Ovary (tissue), 10 donors: ENCODE measurements at regions of chr10 and their contacts with region 1.

Region 1: DNA sequence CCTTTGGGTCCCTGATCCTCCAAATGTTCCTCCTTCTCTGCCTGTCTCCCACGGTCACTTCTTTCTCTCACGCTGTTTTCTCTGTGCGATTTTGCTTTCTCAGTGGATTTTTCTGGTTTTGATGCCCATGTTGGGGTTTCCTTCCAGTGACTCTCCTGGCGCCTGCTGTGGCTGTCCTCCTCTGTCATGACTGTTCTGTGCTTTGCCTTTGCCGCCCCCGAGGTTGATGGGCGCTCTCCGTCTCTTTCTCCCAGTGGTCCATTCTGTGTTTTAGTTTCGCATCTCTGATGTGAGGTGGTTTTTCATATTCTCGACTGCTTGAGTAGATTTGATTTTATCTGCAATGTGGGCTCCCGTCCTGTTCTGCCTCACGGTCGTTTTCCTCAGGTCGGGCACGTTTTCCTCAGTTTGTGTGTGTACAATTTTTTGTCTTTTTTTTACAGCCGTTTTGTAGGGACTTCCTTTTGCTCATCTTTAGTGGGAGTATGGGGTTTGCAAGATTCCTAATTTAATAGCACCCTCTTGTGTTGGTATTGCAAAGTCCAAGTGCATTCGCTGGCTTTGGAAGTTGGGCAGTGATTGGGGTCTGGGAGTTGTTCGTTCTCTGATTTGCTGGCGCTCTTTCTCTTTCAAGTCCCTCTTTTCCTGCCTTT is 100.0 kb downstream of the INPP5A start:
- DNase-seq: peak in 4 of 5 donors; percentile 24 to 36 (median 32)
- H3K4me3 ChIP-seq: no peak overlapping the region
- H3K27ac ChIP-seq: no peak overlapping the region
- H3K4me1 ChIP-seq: peaks cover 6% of the 10 kb centered on the region
- H3K27me3 ChIP-seq: no peaks in the 10 kb centered on the region
- CTCF ChIP-seq: peak; percentile 35 to 82 (median 76)
- EP300 ChIP-seq: no peak
- POLR2A ChIP-seq: no peak

Region 2: GRCh38 chr10:132458593-132459300 is 178.9 kb before region 1 on chr10:
- intact Hi-C with region 1: loop called (anchors 1 to 2 kb)
- DNase-seq: peak; percentile 53 to 82 (median 76)
- H3K4me3 ChIP-seq: no peak overlapping the region
- H3K27ac ChIP-seq: no peak overlapping the region
- H3K4me1 ChIP-seq: peaks cover 3% of the 10 kb centered on the region
- H3K27me3 ChIP-seq: no peaks in the 10 kb centered on the region
- CTCF ChIP-seq: peak; percentile 94 to 98 (median 96)
- EP300 ChIP-seq: no peak
- POLR2A ChIP-seq: peak; percentile 32

Region 3: GRCh38 chr10:132563843-132564521 is 73.6 kb before region 1 on chr10:
- intact Hi-C with region 1: no loop called
- DNase-seq: peak in 2 of 5 donors; percentile 14 to 16
- H3K4me3 ChIP-seq: no peak overlapping the region
- H3K27ac ChIP-seq: no peak overlapping the region
- H3K4me1 ChIP-seq: peaks cover 12% of the 10 kb centered on the region
- H3K27me3 ChIP-seq: no peaks in the 10 kb centered on the region
- CTCF ChIP-seq: no peak
- EP300 ChIP-seq: no peak
- POLR2A ChIP-seq: no peak

Region 4: DNA sequence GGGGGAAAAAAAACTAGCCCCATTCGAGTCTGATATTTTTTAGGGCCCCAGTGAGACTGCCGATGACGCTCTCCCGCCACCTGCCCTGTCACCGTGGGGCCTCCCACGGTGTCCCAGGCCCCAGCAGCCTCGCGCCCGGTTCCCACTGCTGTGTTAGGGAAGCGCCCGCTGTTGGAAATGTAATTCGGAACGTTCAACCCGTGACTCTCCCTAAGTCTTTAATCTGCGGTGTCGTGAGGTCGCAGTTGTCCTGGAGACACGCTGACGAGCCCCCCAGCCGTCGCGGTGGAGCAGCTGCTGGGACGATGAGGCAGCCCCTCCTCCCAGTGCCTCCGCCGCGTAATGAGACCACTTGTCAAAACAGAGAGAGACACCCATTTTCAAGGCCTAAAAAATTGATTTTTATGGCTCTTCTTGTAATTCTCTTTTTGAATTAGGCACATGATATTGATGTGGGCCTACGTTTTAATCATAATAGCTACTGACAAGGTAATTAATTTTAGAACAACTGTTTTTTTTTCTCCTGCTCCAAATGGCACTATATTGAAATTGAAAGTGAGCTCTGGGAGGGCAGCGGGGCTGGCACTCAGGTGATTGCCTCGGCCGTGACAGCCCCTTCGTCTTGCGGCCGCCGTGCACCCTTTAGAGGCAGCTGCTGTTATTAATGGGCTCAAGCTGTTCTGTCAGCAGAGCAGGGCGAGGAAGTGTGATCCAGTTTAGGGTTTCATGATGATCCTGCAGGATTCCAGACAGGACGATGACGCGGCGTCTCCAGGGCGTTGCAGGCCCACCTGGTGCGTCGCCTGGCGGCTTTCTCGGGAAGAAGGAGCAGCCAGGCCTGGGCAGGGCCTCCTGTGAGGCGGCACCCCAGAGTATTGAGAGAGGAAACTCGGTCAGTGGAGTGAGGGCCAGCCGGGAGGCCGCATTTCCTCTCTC is 85.1 kb after region 1 on chr10:
- intact Hi-C with region 1: no loop called
- DNase-seq: no peak
- H3K4me3 ChIP-seq: no peak overlapping the region
- H3K27ac ChIP-seq: no peak overlapping the region
- H3K4me1 ChIP-seq: no peaks in the 10 kb centered on the region
- H3K27me3 ChIP-seq: no peaks in the 10 kb centered on the region
- CTCF ChIP-seq: no peak
- EP300 ChIP-seq: no peak
- POLR2A ChIP-seq: no peak